H1 (cell line): ENCODE measurements at regions of chr2 and their contacts with region 1.

Region 1: DNA sequence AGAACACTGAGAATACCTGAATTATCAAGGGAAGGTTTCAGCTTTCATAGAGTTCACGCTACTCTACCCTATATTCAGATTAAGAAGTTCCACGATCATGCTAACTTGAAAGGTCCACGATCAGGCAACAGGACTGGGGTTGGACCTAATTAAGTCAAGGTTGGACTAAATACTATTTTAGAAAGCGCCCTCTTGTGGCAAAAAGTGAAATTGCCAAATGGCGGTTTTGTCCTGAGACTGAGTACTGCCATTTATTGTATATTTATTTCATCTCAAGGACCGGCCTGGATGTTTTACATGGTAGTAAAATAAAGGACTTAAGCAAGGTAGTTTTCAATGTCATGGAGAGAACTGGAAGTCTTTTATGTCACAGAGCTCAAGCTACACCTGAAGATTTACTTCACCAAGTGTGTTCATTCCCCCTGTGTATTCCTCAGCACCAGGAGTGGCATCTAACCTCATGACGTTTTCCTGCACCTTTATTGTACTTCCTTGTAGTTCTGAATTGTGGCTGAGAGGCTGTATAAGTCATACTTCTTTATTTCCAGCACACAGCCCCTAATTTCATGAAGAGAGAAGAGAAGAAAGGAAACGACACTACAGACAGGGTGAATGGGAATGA is 56.8 kb downstream of the SRD5A2 start:
- DNase-seq: peak in 1 of 2 experiments; percentile 81
- H3K4me3 ChIP-seq: no peak overlapping the region
- H3K27ac ChIP-seq: no peak overlapping the region
- H3K4me1 ChIP-seq: no peaks in the 10 kb centered on the region
- H3K27me3 ChIP-seq: no peaks in the 10 kb centered on the region
- CTCF ChIP-seq: peak in 2 of 3 experiments; percentile 47 to 69; a peak in 3 of 4 replicates
- EP300 ChIP-seq: no peak
- POLR2A ChIP-seq: no peak
- RAD21 ChIP-seq: peak; percentile 42 to 62

Region 2: DNA sequence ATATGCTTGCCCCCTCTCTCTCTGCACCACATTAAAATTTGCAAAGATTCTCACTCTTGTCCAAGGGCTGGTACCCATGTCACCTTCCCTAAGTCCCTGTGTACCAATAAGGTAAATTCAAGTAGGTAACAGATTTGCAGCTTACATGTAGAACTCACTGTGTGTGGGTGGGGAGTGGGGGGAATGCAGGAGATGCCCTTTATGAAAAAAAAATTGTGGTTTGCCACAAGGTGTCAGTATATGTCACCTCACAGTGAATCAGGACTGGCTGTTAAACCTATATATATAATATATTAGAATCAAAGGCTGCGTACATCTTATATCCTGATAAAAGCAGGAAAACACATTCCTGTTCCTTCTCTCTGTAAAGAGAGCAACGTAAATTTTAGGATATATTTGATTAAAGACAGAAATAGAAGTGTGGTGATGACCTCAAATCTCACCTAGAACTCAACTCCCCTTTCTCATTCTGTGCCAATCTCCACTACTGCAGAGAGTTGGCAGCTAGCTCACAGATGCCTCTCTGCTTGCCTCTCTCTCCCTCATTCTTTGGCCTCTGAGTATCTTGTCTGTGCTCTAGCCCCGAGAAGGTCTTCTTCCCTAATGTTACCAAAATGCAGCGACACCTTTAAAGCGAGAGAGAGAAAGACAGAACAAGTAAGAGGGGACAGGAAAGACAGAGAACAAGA is 110.0 kb before region 1 on chr2:
- CTCF ChIA-PET with region 1: interaction called, 11 read pairs
- POLR2A ChIA-PET with region 1: no interaction called
- DNase-seq: no peak
- H3K4me3 ChIP-seq: no peak overlapping the region
- H3K27ac ChIP-seq: no peak overlapping the region
- H3K4me1 ChIP-seq: no peaks in the 10 kb centered on the region
- H3K27me3 ChIP-seq: no peaks in the 10 kb centered on the region
- CTCF ChIP-seq: peak in 1 of 3 experiments; percentile 24; a peak in 1 of 4 replicates
- EP300 ChIP-seq: no peak
- POLR2A ChIP-seq: no peak
- RAD21 ChIP-seq: peak; percentile 41 to 44

Region 3: DNA sequence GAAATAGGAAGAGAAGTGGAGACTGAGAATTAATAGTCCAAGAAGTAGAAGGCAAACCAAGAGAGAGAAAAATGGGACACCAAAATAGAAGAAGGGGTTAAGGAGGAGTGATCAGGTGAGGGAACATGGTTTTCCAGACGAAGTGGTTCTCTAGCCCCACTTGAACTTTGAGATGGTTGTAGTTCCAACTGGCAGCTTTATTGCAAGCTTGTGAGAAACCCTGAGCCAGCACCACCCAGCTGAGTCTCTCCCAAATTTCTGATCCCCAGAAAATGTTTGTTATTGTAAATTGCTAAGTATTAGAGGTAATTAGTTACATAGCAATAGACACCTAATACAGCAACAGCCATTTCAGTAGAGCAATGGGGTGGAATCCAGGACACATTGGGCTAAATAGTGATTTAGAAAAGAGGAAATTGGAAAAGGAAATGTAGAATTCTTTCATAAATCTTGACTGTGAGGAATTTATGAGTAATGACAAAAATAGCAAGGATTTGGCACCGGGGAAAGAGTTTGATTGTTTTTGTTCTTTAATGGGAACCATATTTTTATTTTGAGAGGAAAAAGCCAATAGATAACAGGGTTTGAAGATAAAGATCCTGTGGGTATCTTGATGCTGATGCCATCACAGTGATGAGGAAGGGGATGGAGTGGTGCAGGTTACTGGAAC is 47.3 kb before region 1 on chr2:
- CTCF ChIA-PET with region 1: no interaction called
- POLR2A ChIA-PET with region 1: no interaction called
- DNase-seq: no peak
- H3K4me3 ChIP-seq: no peak overlapping the region
- H3K27ac ChIP-seq: no peak overlapping the region
- H3K4me1 ChIP-seq: no peaks in the 10 kb centered on the region
- H3K27me3 ChIP-seq: no peaks in the 10 kb centered on the region
- CTCF ChIP-seq: no peak
- EP300 ChIP-seq: no peak
- POLR2A ChIP-seq: no peak
- RAD21 ChIP-seq: no peak

Region 4: GRCh38 chr2:31511376-31511775 is 12.6 kb before region 1 on chr2:
- CTCF ChIA-PET with region 1: interaction called, 16 read pairs
- POLR2A ChIA-PET with region 1: no interaction called
- DNase-seq: no peak
- H3K4me3 ChIP-seq: no peak overlapping the region
- H3K27ac ChIP-seq: no peak overlapping the region
- H3K4me1 ChIP-seq: no peaks in the 10 kb centered on the region
- H3K27me3 ChIP-seq: no peaks in the 10 kb centered on the region
- CTCF ChIP-seq: no peak
- EP300 ChIP-seq: no peak
- POLR2A ChIP-seq: no peak
- RAD21 ChIP-seq: no peak